AG04450 (cell line): ENCODE measurements at regions of chr22 and their contacts with region 1.

Region 1: DNA sequence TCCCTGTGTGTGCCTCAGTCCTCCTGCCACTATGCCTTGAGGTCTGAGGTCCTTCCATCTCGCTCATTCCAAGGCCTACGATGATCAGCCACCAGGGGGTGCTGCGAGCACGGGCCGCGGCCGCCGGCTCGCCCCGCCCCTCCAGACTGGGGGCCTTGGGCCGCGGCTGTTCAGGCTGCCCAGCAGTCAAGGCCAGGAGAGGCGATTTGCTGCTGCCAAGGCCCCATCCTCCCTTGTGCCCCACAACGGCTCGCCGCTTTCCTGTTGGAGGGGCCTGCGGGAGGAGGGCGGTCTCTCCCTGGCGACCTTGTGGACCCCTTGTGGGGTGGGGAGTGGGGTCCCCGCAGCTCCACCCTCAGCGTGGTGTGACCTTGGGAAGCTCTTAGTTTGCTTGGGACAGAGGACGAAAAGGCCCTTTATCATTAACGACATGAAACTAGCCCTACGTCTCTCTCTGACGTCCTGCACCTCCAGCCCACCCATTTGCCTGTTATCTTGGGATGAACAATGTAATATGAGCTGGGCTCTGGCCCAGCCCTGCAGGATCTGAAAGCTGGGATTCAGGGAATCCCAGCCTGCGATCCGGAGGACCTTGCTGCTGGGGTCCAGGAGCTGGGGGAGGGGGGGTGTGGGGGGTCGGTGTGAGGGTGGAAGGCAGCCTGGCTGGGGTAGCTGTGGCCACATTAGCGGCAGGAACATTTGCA is 5.3 kb upstream of the GALR3 start:
- DNase-seq: no peak
- H3K4me3 ChIP-seq: peak overlapping the region; percentile 33
- H3K27ac ChIP-seq: peak overlapping the region; percentile 80
- H3K27me3 ChIP-seq: peaks cover 10% of the 10 kb centered on the region
- CTCF ChIP-seq: peak; percentile 80

Region 2: DNA sequence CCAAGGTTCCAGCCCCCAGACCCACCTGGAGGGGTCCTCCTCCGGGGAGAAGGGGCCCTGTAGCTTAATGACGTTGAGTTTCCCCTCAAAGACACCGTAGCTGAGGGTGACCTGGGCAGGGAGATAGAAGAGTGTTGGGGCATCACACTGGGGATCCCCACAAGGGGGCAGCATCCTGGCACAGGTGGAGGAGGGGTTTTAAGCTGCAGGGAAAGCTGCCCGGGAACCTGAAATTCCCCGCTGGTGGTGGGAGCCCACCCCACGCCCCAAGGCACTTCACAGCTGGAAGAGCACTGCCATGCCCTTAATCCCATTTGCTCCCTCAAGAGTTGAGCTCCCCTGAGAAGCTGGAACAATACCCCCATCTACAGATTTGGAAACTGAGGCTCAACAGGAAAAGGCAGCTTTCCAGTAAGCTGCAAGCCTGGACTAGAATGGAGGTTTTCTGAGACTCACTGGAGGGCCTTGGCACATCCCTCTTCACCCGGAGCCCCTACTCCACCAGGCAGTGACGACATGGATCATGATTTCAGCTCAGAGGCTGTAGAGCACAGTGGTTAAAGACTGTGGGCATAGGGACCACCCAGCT is 345.3 kb before region 1 on chr22:
- CTCF ChIA-PET with region 1: no interaction called
- POLR2A ChIA-PET with region 1: no interaction called
- DNase-seq: no peak
- H3K4me3 ChIP-seq: no peak overlapping the region
- H3K27ac ChIP-seq: no peak overlapping the region
- H3K27me3 ChIP-seq: peaks cover 53% of the 10 kb centered on the region
- CTCF ChIP-seq: peak; percentile 69

Region 3: GRCh38 chr22:37807410-37808293 is 10.2 kb before region 1 on chr22 and contains the start of gene GCAT:
- CTCF ChIA-PET with region 1: interaction called, 35 read pairs
- POLR2A ChIA-PET with region 1: interaction called, 12 read pairs
- DNase-seq: peak; percentile 87
- H3K4me3 ChIP-seq: peak within 1 kb of the TSS; percentile 84
- H3K27ac ChIP-seq: peak within 1 kb of the TSS; percentile 84
- H3K27me3 ChIP-seq: no peaks in the 10 kb centered on the region
- CTCF ChIP-seq: no peak
- polyA plus RNA-seq, gene GCAT: 8.9 and 13.2 TPM in 2 replicates

Region 4: DNA sequence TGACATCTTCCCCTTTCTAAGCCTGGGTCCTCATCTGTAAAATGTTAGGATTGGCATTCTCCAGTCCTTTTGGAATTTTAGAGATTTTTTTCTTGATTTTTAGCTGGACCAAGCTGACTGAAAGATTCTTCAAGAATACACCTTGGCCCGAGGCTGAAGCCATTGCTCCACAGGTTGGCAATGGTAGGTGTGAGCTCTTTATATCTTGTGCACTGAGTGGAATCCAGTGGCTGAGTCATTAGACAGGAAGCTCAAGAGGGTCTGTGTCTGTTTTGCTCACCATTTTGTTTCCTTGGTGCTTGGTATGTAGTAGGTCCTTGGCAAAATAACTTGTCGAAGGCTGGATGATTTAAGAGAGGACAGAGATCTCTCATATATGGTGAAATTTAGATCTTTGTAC is 37.6 kb after region 1 on chr22:
- CTCF ChIA-PET with region 1: interaction called, 11 read pairs
- POLR2A ChIA-PET with region 1: interaction called, 3 read pairs
- DNase-seq: no peak
- H3K4me3 ChIP-seq: no peak overlapping the region
- H3K27ac ChIP-seq: no peak overlapping the region
- H3K27me3 ChIP-seq: no peaks in the 10 kb centered on the region
- CTCF ChIP-seq: no peak

Region 5: GRCh38 chr22:37933711-37934376 is 116.0 kb after region 1 on chr22:
- CTCF ChIA-PET with region 1: interaction called, 14 read pairs
- POLR2A ChIA-PET with region 1: no interaction called
- DNase-seq: peak; percentile 55
- H3K4me3 ChIP-seq: no peak overlapping the region
- H3K27ac ChIP-seq: peak overlapping the region; percentile 57
- H3K27me3 ChIP-seq: no peaks in the 10 kb centered on the region
- CTCF ChIP-seq: peak; percentile 98

Region 6: DNA sequence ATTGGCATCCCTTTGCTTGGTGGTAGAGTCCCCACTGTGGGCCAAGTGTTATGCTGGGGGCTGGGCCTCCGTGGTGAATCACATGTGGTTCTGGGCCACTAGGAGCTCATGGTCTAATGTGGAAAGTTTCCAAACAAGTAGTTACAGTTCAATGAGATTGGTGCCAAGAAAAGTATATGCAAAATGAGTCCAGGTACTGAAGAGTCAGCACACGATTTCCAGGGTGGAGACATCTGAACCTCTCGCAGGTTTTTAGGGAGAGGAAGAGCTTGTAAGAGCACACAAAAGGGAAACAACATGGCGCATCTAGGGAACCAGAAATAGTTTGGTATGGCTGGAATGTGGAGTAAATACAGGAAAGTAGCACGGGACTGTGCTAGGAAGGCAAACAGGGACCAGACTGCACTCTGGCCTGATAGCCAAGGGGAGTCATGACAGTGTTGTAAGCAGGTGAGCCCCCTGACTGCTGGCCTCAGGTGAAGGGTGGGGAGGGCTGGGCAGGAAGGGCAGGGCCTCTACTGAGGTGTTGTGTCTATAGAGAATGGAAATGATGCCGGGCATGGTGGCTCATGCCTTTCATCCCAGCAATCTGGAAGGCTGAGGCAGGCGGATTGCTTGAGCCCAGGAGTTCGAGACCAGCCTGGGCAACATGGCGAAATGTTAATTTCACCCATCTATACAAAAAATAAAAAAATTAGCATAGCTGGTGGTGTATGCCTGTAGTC is 148.2 kb after region 1 on chr22:
- CTCF ChIA-PET with region 1: interaction called, 44 read pairs
- POLR2A ChIA-PET with region 1: no interaction called
- DNase-seq: no peak
- H3K4me3 ChIP-seq: no peak overlapping the region
- H3K27ac ChIP-seq: no peak overlapping the region
- H3K27me3 ChIP-seq: no peaks in the 10 kb centered on the region
- CTCF ChIP-seq: no peak